ENCODE measurements at regions of chr11 and their contacts with region 1.

Region 1: GRCh38 chr11:61899146-61899841 is 7.9 kb upstream of the FADS3 start:
- DNase-seq: peak; percentile 93
- ATAC-seq: peak; percentile 74

Region 2: GRCh38 chr11:61792310-61793085 is 106.8 kb before region 1 on chr11 and contains the starts of genes FEN1 and TMEM258:
- intact Hi-C with region 1: loop called (anchors 2 kb)
- DNase-seq: peak; percentile 95
- ATAC-seq: peak; percentile 93
- total RNA-seq, gene FEN1: 7.0 TPM
- total RNA-seq, gene TMEM258: 130 TPM

Region 3: DNA sequence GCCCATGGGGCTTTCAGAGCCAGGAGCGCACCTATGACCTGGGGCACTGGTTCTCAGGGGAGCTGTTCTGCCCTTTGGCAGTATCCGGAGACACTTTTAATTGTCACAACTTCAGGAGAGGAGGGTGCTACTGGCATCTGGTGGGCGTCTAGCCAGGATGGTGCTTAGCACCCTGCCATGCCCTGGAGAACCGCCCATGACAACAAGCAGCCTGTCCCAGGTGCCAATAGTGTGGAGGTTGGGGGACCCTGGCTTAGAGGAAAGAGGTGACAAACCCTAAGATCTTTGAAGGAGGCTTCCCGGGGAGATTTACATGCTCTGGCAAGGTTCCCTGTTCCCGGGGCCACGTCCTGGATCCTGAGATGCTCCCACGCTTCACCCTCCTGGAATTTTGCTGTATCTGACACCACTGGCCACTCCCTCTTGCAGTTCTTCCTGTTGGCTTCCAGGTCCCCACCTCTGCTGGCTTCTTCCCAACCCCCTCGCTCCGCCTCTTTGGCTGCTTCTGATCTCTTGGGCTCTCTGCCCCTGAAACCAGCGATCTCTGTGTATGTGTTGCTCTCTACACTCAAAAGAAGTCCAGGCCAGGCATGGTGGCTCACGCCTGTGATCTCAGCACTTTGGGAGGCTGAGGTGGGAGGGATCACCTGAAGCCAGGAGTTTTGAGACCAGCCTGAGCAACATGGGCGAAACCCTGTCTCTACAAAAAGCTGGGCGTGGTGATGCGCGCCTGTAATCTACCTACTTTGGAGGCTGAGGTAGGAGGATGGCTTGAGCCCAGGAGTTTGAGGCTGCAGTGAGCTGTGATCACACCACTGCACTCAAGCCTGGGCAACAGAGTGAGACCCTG is 39.0 kb before region 1 on chr11:
- intact Hi-C with region 1: no loop called
- DNase-seq: peak; percentile 78
- ATAC-seq: peak; percentile 77

Region 4: GRCh38 chr11:61871158-61871597 is 28.1 kb before region 1 on chr11:
- intact Hi-C with region 1: loop called (anchors 2 kb)
- DNase-seq: peak; percentile 91
- ATAC-seq: peak; percentile 86

Region 5: GRCh38 chr11:61888043-61888442 is 11.3 kb before region 1 on chr11:
- intact Hi-C with region 1: no loop called
- DNase-seq: peak; percentile 90
- ATAC-seq: peak; percentile 74

Region 6: DNA sequence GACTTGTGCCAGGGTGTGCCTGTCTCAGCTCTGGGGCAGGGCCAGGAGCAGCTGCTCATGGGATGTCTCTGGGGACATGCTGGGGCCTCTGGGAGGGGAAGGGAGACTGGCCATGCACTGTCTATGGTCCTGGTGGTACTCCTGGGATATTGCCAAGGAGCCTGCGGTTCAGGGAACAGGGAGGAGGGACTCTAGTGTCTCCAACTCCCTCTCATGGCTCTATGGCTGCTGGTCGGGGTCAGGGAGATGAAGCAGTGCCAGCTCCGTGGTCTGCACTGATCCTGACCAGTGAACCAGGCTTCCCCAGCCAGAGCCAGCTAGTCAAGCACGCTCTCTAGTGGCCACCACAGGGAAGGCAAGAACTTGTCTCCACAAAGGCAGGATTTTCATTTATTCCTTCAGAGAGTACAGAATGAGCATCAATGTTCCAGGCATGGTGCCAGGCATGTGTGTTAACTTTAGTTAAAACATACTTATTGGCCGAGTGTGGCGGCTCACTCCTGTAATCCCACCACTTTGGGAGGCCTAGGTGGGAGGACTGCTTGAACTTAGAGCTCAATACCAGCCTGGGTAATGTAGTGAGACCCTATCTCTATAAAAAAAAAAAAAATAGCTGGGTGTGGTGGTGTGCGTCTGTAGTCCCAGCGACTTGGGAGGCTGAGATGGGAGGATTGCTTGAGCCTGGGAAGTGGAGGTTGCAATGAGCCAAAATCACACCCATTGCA is 48.4 kb after region 1 on chr11:
- intact Hi-C with region 1: loop called (anchors 1 kb)
- DNase-seq: peak; percentile 91
- ATAC-seq: peak; percentile 79

Region 7: GRCh38 chr11:62081378-62082291 is 182.3 kb after region 1 on chr11:
- intact Hi-C with region 1: loop called (anchors 1 kb)
- DNase-seq: peak; percentile 92
- ATAC-seq: peak; percentile 74

Region 8: DNA sequence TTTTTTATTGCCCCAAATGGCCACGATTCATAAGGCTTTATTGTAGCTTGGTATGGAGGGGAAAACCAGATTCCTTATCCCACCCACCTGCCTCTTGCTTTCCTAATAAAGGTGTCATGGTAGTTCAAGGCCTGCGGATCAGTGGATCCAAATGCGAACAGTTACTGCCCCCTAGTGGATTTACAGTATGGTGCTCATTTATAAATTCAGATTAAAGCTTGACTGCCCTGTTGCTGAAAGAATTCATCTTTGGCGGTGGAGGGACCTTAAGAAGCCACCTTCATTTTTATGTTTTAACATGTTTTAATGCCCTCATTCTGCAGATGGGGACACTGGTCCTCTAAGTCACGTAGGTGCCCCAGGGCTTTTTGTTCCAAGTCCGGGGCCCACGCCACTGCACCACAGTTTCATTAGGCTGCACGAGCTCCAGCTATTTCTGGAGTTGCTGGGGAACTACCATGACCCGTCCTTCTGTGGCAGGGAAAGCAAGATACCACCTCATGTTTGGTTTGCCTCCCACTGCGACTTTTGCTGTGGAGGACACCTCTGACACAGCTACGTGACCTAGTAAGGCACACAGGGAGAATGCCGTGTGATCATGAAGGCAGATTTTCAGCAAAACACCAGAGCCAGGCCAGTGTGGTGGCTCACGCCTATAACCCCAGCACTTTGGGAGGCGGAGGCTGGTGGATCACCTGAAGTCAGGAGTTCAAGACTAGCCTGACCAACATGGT is 208.9 kb after region 1 on chr11:
- intact Hi-C with region 1: loop called (anchors 5 kb)
- DNase-seq: no peak
- ATAC-seq: peak; percentile 37

Measured in Right ventricle myocardium inferior (tissue), 1 donor.